ENCODE measurements at regions of chr11 and their contacts with region 1.

Region 1: DNA sequence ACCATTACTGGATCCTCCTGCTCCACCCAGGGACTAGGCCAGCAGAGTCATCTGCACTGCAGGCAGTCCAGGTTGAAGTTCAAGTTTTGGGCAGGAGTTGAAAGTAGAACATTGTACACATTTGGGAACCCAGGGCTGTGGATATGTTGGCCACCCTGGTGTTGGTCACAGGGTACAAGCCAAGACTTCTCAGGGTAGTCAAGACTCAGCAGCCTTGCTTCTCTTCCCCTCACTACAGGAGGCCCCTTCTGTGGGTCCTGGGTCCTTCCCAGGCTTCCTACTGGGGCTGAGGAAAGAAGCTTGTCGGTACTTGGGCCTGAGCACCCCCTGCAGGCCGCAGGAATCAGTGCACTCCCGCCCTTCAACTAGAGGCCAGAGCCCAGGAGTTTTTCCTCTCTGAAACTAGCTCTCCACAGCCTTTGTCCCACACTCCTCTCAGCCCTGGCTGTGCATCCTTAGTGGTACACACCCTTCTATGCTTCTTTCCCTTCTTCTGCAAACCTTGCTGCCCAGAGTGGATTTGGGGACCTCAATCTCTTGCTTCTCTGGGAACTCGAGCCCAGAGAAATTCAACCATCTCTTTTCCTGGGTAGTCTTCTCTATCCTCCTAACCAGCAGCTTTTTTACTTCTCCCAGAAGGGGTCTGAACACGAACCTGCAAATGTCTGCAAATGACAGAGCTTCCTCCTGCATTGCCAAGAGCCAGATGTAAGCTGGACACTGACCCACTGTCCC is 2.6 kb upstream of the HPX start:
- DNase-seq: peak; percentile 57
- H3K4me3 Mint-ChIP-seq: no peak overlapping the region
- H3K27ac Mint-ChIP-seq: no peak overlapping the region
- H3K4me1 Mint-ChIP-seq: no peaks in the 10 kb centered on the region
- H3K27me3 Mint-ChIP-seq: no peaks in the 10 kb centered on the region
- CTCF ChIP-seq: peak; percentile 88

Region 2: DNA sequence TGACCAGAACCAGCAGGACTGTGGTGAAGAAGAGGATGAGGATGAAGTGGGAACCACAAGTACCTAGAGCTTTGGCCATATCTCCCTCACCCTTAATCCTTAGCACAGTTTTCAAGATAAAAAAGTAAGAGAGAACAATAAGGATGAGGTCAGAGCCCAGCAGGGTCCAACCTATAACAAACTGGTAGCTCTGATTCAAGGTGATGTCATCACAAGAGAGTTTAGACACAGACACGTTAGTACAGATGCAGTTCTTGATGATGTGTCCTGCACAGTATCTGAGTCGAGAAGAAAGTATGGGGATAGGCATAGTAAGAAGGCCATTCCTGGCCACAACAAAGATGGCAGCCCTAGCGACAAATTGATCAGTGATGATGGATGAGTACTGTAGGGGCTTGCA is 475.7 kb before region 1 on chr11:
- CTCF ChIA-PET with region 1: no interaction called
- POLR2A ChIA-PET with region 1: no interaction called
- intact Hi-C with region 1: no loop called
- DNase-seq: no peak
- H3K4me3 Mint-ChIP-seq: no peak overlapping the region
- H3K27ac Mint-ChIP-seq: no peak overlapping the region
- H3K4me1 Mint-ChIP-seq: no peaks in the 10 kb centered on the region
- H3K27me3 Mint-ChIP-seq: peaks cover 12% of the 10 kb centered on the region
- CTCF ChIP-seq: no peak

Region 3: DNA sequence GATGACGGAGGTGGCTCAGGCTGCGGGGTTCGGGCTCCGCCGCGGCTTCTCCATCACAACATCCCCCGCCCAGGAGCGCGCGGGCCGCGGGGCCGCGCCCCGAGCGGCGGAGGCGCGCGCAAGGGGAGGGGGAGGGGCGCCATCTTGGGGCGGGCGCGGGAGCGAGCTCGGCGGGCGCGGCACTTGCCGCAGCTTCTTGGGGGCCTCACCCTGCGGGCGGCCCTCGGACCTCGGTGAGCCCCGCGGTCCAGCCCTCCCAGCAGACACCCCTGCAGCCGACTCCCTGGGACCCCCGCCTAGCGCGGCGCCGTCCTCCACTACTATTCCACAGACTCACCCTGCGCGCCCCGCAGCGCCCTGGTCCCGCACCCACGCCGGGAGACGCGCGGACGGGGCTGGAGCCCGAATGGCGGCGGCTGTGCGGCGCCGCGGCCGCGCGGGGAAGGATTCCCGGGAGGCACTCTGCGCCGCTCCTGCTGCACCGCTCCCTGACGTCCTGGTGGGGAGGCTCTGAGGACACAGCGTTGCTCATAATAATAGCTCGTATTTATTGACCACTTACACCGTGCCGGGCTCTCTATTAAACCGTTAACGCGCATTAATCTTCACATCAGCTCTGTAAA is 24.3 kb before region 1 on chr11 and contains the start of gene APBB1:
- CTCF ChIA-PET with region 1: interaction called, 38 read pairs
- POLR2A ChIA-PET with region 1: no interaction called
- intact Hi-C with region 1: no loop called
- DNase-seq: no peak
- H3K4me3 Mint-ChIP-seq: peak within 1 kb of the TSS; percentile 45
- H3K27ac Mint-ChIP-seq: no peak within 1 kb of the TSS
- H3K4me1 Mint-ChIP-seq: no peaks in the 10 kb centered on the region
- H3K27me3 Mint-ChIP-seq: peaks cover 37% of the 10 kb centered on the region
- CTCF ChIP-seq: no peak
- total RNA-seq, gene APBB1: 0.89 and 1.3 TPM in 2 replicates

Region 4: DNA sequence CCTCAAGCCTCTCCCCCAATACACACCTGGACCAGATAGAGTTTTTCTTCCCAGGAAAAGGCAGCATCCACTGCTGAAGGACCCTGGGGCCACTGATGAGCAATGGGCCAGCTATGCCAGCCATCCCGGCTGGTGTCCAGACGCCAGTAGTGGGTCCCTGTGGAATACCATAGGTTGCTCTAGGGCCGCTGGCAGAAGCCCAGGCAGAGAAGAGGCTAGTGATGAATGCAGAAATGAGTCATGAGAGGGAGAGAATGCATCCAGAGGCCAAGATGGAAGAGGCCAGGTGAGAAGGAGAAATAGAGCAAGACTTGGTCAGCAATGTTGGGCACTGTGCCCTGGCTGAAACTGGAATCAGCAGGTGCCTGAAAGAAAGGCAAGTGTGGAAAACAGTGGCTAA is 11.6 kb before region 1 on chr11:
- CTCF ChIA-PET with region 1: interaction called, 55 read pairs
- POLR2A ChIA-PET with region 1: interaction called, 4 read pairs
- intact Hi-C with region 1: no loop called
- DNase-seq: peak; percentile 98
- H3K4me3 Mint-ChIP-seq: no peak overlapping the region
- H3K27ac Mint-ChIP-seq: no peak overlapping the region
- H3K4me1 Mint-ChIP-seq: peaks cover 12% of the 10 kb centered on the region
- H3K27me3 Mint-ChIP-seq: no peaks in the 10 kb centered on the region
- CTCF ChIP-seq: no peak

Region 5: GRCh38 chr11:6458352-6459098 is 15.1 kb after region 1 on chr11:
- CTCF ChIA-PET with region 1: interaction called, 79 read pairs
- POLR2A ChIA-PET with region 1: no interaction called
- intact Hi-C with region 1: no loop called
- DNase-seq: no peak
- H3K4me3 Mint-ChIP-seq: no peak overlapping the region
- H3K27ac Mint-ChIP-seq: no peak overlapping the region
- H3K4me1 Mint-ChIP-seq: no peaks in the 10 kb centered on the region
- H3K27me3 Mint-ChIP-seq: no peaks in the 10 kb centered on the region
- CTCF ChIP-seq: no peak

Region 6: GRCh38 chr11:6473481-6474422 is 30.3 kb after region 1 on chr11 and contains the start of gene TRIM3:
- CTCF ChIA-PET with region 1: interaction called, 14 read pairs
- POLR2A ChIA-PET with region 1: no interaction called
- intact Hi-C with region 1: no loop called
- DNase-seq: peak; percentile 83
- H3K4me3 Mint-ChIP-seq: peak within 1 kb of the TSS; percentile 83
- H3K27ac Mint-ChIP-seq: peak within 1 kb of the TSS; percentile 87
- H3K4me1 Mint-ChIP-seq: peaks cover 11% of the 10 kb centered on the region
- H3K27me3 Mint-ChIP-seq: no peaks in the 10 kb centered on the region
- CTCF ChIP-seq: no peak
- total RNA-seq, gene TRIM3: 7.3 and 7.4 TPM in 2 replicates

Region 7: GRCh38 chr11:6505577-6506240 is 62.3 kb after region 1 on chr11:
- CTCF ChIA-PET with region 1: interaction called, 21 read pairs
- POLR2A ChIA-PET with region 1: interaction called, 3 read pairs
- intact Hi-C with region 1: loop called (anchors 1 kb)
- DNase-seq: peak; percentile 64
- H3K4me3 Mint-ChIP-seq: no peak overlapping the region
- H3K27ac Mint-ChIP-seq: no peak overlapping the region
- H3K4me1 Mint-ChIP-seq: no peaks in the 10 kb centered on the region
- H3K27me3 Mint-ChIP-seq: no peaks in the 10 kb centered on the region
- CTCF ChIP-seq: peak; percentile 52